ENCODE measurements at regions of chr13 and their contacts with region 1.

Region 1: GRCh38 chr13:80931766-80932165 is 590.8 kb upstream of the SPRY2 start:
- DNase-seq: no peak
- ATAC-seq: peak; percentile 38

Region 2: GRCh38 chr13:80965097-80965496 is 33.3 kb after region 1 on chr13:
- intact Hi-C with region 1: loop called (anchors 5 kb)
- DNase-seq: no peak
- ATAC-seq: no peak